ENCODE measurements at regions of chr5 and their contacts with region 1.

Region 1: DNA sequence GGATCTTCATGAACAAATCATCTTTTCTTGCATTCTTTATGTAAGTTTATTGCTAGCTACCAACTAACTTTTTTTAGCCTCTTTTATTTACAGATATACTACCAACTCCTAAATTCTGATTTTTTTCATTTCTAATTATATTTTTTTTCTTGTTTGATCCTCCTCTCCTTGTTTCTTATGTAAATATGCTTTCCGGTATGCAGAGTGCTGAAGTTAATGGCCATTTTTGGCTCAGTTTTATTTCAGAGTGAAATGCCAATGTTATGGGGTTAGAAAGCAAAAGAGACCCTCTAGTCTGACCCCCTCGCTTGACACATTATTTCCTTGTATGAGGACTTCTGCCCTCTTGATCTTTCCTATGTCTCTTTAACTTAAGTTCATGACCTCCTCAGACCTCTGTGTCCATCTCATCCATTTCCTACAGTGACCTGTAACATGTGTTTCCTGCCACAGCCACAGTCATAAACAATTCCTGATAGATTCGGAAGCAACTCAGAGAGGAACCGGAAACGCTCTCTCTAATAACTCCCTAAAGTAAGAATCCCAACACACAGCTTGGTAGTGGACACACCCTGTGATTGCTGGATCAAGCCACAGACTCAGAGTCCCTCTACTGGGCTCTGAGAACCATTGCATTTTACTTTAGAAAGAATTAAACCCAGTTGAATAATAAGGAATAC is 42.9 kb upstream of the AFAP1L1 start:
- DNase-seq: peak; percentile 74 to 85
- ATAC-seq: peak; percentile 93 to 98
- H3K4me3 ChIP-seq: no peak overlapping the region
- H3K27ac ChIP-seq: peak overlapping the region; percentile 19 to 25; a peak in 2 of 6 replicates
- H3K4me1 ChIP-seq: peaks cover 16% of the 10 kb centered on the region; the same call in 1 of the 3 replicates
- CTCF ChIP-seq: peak; percentile 64
- EP300 ChIP-seq: no peak
- POLR2A ChIP-seq: no peak
- RAD21 ChIP-seq: peak; percentile 78 to 86

Region 2: DNA sequence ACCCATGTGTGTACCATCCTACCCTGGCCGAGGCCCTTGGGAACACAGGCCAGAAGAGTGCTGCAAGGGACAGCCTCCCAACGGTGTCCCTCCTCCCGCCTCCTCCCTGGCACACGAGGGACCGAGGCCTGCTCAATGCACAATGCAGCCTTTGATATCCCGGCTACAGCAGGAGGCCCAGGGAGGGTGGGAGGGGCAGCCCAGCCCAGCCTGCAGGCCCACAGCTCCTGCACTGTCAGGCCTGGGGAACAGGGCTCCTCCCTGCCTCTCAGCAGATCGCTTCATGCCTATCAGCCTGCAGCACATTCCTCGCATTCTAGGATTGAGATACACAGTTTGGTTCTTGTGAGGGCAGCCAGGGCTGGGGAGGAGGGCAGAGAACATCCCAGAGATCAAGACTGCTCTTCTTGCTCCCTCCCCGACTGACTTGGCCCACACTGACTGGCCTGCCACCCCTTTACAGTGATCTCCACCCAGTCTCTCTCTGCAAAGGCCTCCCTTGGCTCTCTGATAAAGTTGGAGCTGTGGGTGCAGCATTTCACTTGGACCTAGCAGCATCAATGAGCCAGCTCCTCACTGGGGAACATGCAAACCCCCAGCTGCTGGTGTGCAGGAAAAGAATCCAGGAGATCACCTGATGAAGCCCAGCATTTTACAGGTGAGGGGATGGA is 165.6 kb before region 1 on chr5 and contains the start of gene SH3TC2:
- CTCF ChIA-PET with region 1: no interaction called
- POLR2A ChIA-PET with region 1: no interaction called
- DNase-seq: peak; percentile 14 to 20
- ATAC-seq: peak; percentile 54 to 75; a peak in 5 of 6 replicates
- H3K4me3 ChIP-seq: no peak within 1 kb of the TSS
- H3K27ac ChIP-seq: peak within 1 kb of the TSS; percentile 51 to 76; a peak in 5 of 6 replicates
- H3K4me1 ChIP-seq: peaks cover 13% of the 10 kb centered on the region
- CTCF ChIP-seq: no peak
- EP300 ChIP-seq: no peak
- POLR2A ChIP-seq: no peak
- RAD21 ChIP-seq: no peak
- polyA plus RNA-seq, gene SH3TC2: 0.06 and 0.17 TPM in 2 replicates

Region 3: DNA sequence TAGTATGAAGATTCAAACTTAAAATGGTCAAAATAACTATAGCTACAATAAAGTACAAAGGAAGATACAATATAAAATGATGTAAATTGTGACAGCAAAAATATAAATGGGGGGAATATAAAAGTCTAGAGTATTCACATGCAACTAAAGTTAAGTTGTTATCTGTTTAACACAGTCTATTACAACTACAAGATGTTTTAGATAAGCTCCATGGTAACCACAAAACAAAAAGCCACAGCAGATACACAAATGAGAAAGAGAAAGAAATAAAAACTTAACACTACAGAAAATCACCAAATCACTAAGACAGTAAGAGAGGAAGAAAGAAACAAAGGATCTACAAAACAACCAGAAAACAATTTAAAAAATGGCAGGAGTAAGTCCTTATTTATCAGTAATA is 148.9 kb before region 1 on chr5:
- CTCF ChIA-PET with region 1: no interaction called
- POLR2A ChIA-PET with region 1: no interaction called
- DNase-seq: no peak
- ATAC-seq: no peak
- H3K4me3 ChIP-seq: no peak overlapping the region
- H3K27ac ChIP-seq: no peak overlapping the region
- H3K4me1 ChIP-seq: no peaks in the 10 kb centered on the region
- CTCF ChIP-seq: no peak
- EP300 ChIP-seq: no peak
- POLR2A ChIP-seq: no peak
- RAD21 ChIP-seq: no peak

Region 4: DNA sequence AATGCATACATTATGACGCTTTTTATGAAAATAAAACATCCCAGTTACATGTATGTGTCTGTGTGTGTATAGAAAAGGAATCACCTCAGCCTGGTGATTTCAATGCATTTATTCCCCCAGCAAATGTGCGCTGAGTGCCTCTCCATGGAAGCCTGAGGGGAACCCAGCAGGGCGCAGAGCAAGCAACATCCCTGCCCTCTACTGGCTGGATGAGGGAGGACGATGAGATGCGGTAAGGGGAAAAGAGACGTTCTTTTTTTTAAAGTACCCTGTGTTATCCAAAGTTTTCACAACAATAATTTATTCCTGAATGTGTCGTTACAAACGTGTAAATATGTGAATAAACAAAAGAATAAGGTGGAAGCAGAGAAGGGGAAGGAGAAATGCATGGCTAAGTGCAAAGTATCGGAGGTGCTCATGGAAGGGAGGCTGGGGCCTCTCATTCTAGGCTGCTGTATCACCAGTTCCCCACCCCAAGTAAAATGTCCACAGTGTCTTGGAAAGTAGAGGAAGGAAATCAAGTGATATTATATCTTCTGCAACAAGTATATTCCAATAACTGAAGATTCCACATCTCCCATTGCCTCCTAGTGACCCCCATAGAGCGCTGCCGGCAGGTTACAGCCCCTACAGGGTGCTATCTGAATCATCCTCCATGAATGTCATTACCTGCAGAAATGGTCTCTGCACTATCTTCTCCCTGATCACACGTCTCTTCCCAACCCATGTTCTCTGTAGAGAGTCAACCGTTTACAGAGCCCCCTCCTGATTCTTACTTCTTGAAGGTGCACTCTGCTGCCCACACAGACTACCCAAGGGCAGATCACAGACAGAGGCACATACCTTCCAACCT is 100.5 kb before region 1 on chr5:
- CTCF ChIA-PET with region 1: interaction called, 79 read pairs
- POLR2A ChIA-PET with region 1: no interaction called
- DNase-seq: peak; percentile 30 to 76
- ATAC-seq: peak; percentile 88 to 97
- H3K4me3 ChIP-seq: no peak overlapping the region
- H3K27ac ChIP-seq: no peak overlapping the region
- H3K4me1 ChIP-seq: no peaks in the 10 kb centered on the region
- CTCF ChIP-seq: peak; percentile 60
- EP300 ChIP-seq: no peak
- POLR2A ChIP-seq: no peak
- RAD21 ChIP-seq: peak; percentile 31 to 57; a peak in 4 of 5 replicates

Region 5: GRCh38 chr5:149133795-149134780 is 94.7 kb before region 1 on chr5:
- CTCF ChIA-PET with region 1: interaction called, 149 read pairs
- POLR2A ChIA-PET with region 1: no interaction called
- DNase-seq: peak; percentile 62 to 72
- ATAC-seq: peak; percentile 92 to 96
- H3K4me3 ChIP-seq: no peak overlapping the region
- H3K27ac ChIP-seq: peak overlapping the region; percentile 73 to 78
- H3K4me1 ChIP-seq: peaks cover 21% of the 10 kb centered on the region
- CTCF ChIP-seq: no peak
- EP300 ChIP-seq: no peak
- POLR2A ChIP-seq: no peak
- RAD21 ChIP-seq: no peak

Region 6: DNA sequence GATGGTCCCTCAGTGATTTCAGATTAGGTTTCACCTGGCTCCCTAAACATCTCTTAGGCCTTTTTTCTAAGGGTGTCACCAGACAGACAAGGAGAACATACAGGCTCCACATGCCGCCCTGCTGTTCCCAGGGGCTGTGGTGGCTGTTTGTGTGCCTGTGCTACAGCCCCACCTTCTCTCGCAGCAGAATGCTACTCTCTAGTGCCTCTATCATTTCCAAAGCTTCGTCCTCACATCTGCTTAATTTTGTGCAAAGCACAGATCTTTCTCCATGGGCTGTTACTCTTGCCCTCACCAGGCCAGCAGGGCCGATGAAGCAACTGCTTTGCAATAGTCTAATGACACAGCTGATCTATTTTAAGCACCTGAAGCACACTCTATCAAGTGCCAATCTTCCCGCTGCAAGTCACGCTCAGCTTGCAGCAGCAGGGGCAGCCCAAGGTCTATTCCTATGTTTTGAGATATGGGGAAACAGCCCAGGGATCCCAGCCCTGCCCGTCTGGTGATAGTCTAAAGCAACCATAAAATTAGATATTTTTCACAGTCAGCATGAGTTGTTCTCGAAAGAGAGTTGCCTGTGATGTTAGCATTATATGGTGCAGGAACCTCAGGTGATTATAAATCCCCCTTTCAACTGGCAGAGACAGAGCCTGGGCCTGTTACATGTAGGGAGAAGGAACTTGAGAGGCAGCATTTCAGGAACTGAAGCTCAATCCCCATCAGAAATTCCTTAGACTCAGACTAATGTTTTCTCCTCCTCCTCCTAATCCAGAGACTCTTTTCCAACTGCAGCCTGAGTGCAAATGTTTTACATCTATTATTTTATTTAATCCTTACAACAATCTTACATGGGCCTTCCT is 74.8 kb before region 1 on chr5:
- CTCF ChIA-PET with region 1: interaction called, 13 read pairs
- POLR2A ChIA-PET with region 1: no interaction called
- DNase-seq: peak in 1 of 2 experiments; percentile 35
- ATAC-seq: peak; percentile 54 to 68; a peak in 5 of 6 replicates
- H3K4me3 ChIP-seq: no peak overlapping the region
- H3K27ac ChIP-seq: peak overlapping the region; percentile 41 to 61
- H3K4me1 ChIP-seq: peaks cover 23% of the 10 kb centered on the region
- CTCF ChIP-seq: no peak
- EP300 ChIP-seq: no peak
- POLR2A ChIP-seq: no peak
- RAD21 ChIP-seq: no peak

Region 7: GRCh38 chr5:149212198-149212951 is 16.4 kb before region 1 on chr5:
- CTCF ChIA-PET with region 1: interaction called, 34 read pairs
- POLR2A ChIA-PET with region 1: no interaction called
- DNase-seq: no peak
- ATAC-seq: no peak
- H3K4me3 ChIP-seq: no peak overlapping the region
- H3K27ac ChIP-seq: no peak overlapping the region
- H3K4me1 ChIP-seq: no peaks in the 10 kb centered on the region
- CTCF ChIP-seq: no peak
- EP300 ChIP-seq: no peak
- POLR2A ChIP-seq: no peak
- RAD21 ChIP-seq: no peak

Region 8: DNA sequence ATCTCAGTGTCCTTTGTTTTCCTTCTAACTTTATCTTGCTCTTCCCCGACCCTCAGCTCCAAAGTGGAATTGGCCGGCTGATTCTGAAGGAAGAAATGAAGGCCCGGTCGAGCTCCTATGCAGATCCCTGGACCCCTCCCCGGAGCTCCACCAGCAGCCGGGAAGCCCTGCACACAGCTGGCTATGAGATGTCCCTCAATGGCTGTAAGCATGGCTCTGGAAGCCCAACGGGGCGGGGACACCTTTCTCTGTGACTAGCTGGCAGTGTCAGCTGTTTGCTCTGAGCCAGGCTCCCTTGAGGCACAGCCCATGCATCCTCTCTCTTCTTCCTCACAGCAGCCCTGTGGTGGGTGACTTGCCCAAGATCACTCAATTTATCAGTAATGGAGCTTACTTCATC is 19.0 kb after region 1 on chr5:
- CTCF ChIA-PET with region 1: interaction called, 17 read pairs
- POLR2A ChIA-PET with region 1: no interaction called
- DNase-seq: no peak
- ATAC-seq: no peak
- H3K4me3 ChIP-seq: no peak overlapping the region
- H3K27ac ChIP-seq: no peak overlapping the region
- H3K4me1 ChIP-seq: no peaks in the 10 kb centered on the region
- CTCF ChIP-seq: no peak
- EP300 ChIP-seq: no peak
- POLR2A ChIP-seq: no peak
- RAD21 ChIP-seq: no peak